Spleen (tissue), 13 donors: ENCODE measurements at regions of chr9 and their contacts with region 1.

Region 1: GRCh38 chr9:36407122-36407723 is 7.2 kb upstream of the RNF38 start:
- DNase-seq: no peak
- H3K4me3 ChIP-seq: no peak overlapping the region
- H3K27ac ChIP-seq: peak overlapping the region in 3 of 8 donors; percentile 1 to 46 (median 16)
- H3K4me1 ChIP-seq: peaks cover 0 to 24% (median 7%) of the 10 kb centered on the region in 6 donors
- H3K27me3 ChIP-seq: no peaks in the 10 kb centered on the region
- CTCF ChIP-seq: peak; percentile 64 to 94 (median 90)
- POLR2A ChIP-seq: no peak

Region 2: GRCh38 chr9:36457836-36458429 is 50.7 kb after region 1 on chr9:
- intact Hi-C with region 1: loop called (anchors 5 kb)
- DNase-seq: no peak
- H3K4me3 ChIP-seq: peak overlapping the region in 1 of 8 donors; percentile 40
- H3K27ac ChIP-seq: peak overlapping the region in 6 of 8 donors; percentile 5 to 72 (median 48)
- H3K4me1 ChIP-seq: peaks cover 8 to 88% (median 63%) of the 10 kb centered on the region in 6 donors
- H3K27me3 ChIP-seq: no peaks in the 10 kb centered on the region
- CTCF ChIP-seq: no peak
- POLR2A ChIP-seq: no peak

Region 3: GRCh38 chr9:36551129-36551528 is 143.9 kb after region 1 on chr9:
- intact Hi-C with region 1: loop called (anchors 2 kb)
- DNase-seq: no peak
- H3K4me3 ChIP-seq: no peak overlapping the region
- H3K27ac ChIP-seq: no peak overlapping the region
- H3K4me1 ChIP-seq: peaks cover 0 to 6% (median 0%) of the 10 kb centered on the region in 6 donors
- H3K27me3 ChIP-seq: peaks cover 0 to 3% (median 0%) of the 10 kb centered on the region in 7 donors
- CTCF ChIP-seq: no peak
- POLR2A ChIP-seq: no peak